Right cardiac atrium (tissue), 5 donors: ENCODE measurements at regions of chr17 and their contacts with region 1.

Region 1: GRCh38 chr17:79393358-79394202 is 217.3 kb downstream of the RBFOX3 start:
- DNase-seq: peak; percentile 82 to 94 (median 93)
- ATAC-seq: peak; percentile 78 to 81
- H3K4me3 ChIP-seq: no peak overlapping the region
- H3K27ac ChIP-seq: no peak overlapping the region
- H3K4me1 ChIP-seq: no peaks in the 10 kb centered on the region
- H3K27me3 ChIP-seq: no peaks in the 10 kb centered on the region

Region 2: GRCh38 chr17:78993241-78993956 is 400.2 kb before region 1 on chr17:
- intact Hi-C with region 1: loop called in 1 of 4 experiments (anchors 10 kb)
- DNase-seq: peak; percentile 24 to 83 (median 79)
- ATAC-seq: peak; percentile 37 to 57
- H3K4me3 ChIP-seq: no peak overlapping the region
- H3K27ac ChIP-seq: no peak overlapping the region
- H3K4me1 ChIP-seq: no peaks in the 10 kb centered on the region
- H3K27me3 ChIP-seq: no peaks in the 10 kb centered on the region

Region 3: GRCh38 chr17:79019632-79020584 is 373.7 kb before region 1 on chr17:
- intact Hi-C with region 1: no loop called
- DNase-seq: peak; percentile 88 to 92 (median 91)
- ATAC-seq: peak; percentile 62 to 63
- H3K4me3 ChIP-seq: no peak overlapping the region
- H3K27ac ChIP-seq: peak overlapping the region; percentile 88
- H3K4me1 ChIP-seq: peaks cover 18% of the 10 kb centered on the region
- H3K27me3 ChIP-seq: no peaks in the 10 kb centered on the region

Region 4: GRCh38 chr17:79087428-79088143 is 306.0 kb before region 1 on chr17:
- intact Hi-C with region 1: loop called (anchors 2 to 5 kb)
- DNase-seq: peak; percentile 61 to 89 (median 86)
- ATAC-seq: peak; percentile 54 to 58
- H3K4me3 ChIP-seq: no peak overlapping the region
- H3K27ac ChIP-seq: no peak overlapping the region
- H3K4me1 ChIP-seq: peaks cover 3% of the 10 kb centered on the region
- H3K27me3 ChIP-seq: no peaks in the 10 kb centered on the region

Region 5: DNA sequence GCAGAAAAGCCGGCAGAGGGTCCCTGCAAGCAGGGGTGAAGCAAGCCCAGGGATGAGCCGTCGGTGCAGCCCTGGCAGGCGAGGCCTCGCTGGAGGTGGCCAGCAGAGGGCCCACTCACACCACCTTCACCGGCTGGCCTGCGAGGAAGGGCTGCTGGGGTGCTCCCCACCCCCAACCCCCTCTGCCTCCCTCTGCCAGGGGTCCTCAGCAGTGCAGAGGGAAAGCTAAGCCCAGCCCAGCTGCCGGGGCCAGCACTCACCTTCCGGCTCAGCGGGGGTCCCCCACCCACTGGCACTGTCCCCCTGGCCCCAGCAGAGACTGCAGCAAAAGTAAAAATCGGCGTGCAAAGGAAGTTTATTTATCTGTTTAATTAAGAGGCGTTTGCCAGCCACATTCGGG is 205.5 kb before region 1 on chr17:
- intact Hi-C with region 1: loop called in 1 of 4 experiments (anchors 5 kb)
- DNase-seq: no peak
- ATAC-seq: peak in 1 of 2 donors; percentile 46
- H3K4me3 ChIP-seq: no peak overlapping the region
- H3K27ac ChIP-seq: no peak overlapping the region
- H3K4me1 ChIP-seq: no peaks in the 10 kb centered on the region
- H3K27me3 ChIP-seq: no peaks in the 10 kb centered on the region